GM18951 (cell line): ENCODE measurements at regions of chr11 and their contacts with region 1.

Region 1: GRCh38 chr11:128164080-128164741 is 423.1 kb downstream of the ETS1 start:
- POLR2A ChIP-seq: no peak

Region 2: DNA sequence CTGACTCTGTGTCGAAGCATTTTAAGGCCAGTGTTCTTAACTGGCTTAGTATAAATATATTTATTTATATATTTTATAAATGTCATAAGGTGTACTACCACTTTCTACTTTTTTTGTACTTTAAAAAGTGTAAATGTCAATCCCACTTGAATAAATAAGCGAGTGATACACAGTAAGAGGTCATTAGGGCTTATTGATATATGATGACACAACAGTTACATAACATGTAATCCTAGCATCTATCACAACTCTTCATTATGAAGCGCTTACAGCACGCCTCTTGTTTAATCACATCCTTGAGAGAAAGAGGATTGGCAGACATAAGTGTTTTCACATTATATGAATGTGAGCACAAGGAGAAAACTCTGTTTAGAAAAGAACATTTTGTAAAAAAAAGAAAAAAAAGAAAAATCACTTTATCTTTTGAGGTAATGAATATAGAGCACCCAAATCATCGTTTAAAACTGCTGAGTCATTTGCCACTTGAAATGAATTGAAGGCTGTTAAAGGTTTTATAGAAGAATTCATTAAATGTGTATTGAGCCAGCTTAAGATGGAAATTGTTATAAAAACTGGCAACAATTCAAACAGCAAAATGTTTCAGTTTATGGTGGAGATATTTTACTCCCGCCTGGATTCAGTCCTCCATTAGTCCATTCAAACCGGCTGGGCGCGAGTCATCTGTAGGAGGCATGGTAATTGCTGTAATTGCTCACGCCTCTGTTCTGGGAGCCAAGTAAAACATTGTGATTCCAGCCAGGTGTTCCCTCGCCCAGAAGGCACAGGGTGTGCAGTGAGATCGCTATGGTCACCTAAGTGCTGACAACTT is 536.4 kb before region 1 on chr11:
- in situ Hi-C with region 1: no loop called
- POLR2A ChIP-seq: no peak

Region 3: DNA sequence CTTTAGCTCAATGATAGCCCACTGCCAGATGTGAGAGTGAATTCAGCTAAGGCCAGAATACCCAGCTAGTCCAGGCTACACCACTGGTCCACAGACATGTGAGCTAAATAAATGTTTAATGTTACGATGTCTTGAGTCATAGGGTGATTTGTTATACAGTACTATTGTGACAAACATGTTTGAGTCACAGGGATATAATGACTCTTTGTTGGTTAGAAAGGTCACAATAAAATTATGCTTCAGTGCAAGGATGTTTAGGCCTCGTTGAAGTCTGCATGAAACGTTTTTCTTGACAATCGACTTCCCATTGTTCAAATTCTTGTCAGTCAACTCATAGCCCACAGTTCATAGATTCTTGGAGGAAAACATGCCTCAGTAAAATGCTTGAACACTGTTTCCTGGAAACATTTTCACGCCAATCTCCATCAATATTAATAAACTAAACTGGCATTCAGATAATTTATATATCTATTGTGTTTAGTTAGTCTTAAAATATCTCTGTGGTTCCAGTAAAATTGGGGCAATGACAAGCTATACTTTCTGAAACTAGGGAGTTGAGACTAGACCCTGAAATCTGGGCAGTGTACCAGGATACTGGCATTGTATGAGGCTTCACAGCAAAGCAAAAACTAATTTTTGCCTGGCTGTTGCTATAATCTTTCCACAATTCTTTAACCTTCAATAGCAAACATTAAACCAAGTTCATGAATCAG is 512.9 kb before region 1 on chr11:
- in situ Hi-C with region 1: no loop called
- POLR2A ChIP-seq: no peak

Region 4: GRCh38 chr11:127733552-127733951 is 430.7 kb before region 1 on chr11:
- in situ Hi-C with region 1: no loop called
- POLR2A ChIP-seq: no peak

Region 5: GRCh38 chr11:128039140-128040021 is 124.8 kb before region 1 on chr11:
- in situ Hi-C with region 1: loop called (anchors 10 kb)
- POLR2A ChIP-seq: no peak

Region 6: GRCh38 chr11:128116885-128117284 is 47.3 kb before region 1 on chr11:
- in situ Hi-C with region 1: no loop called
- POLR2A ChIP-seq: no peak